Activated CD4-positive, alpha-beta T cell treated with anti-CD3 and anti-CD28 coated beads for 36 hours (primary cell): ENCODE measurements at regions of chr18 and their contacts with region 1.

Region 1: GRCh38 chr18:62425465-62426195 is 97.2 kb upstream of the ZCCHC2 start:
- DNase-seq: peak; percentile 75
- ATAC-seq: peak; percentile 50
- H3K4me3 Mint-ChIP-seq: no peak overlapping the region
- H3K27ac Mint-ChIP-seq: peak overlapping the region; percentile 81
- H3K4me1 Mint-ChIP-seq: peaks cover 31% of the 10 kb centered on the region
- H3K27me3 Mint-ChIP-seq: peaks cover 4% of the 10 kb centered on the region

Region 2: GRCh38 chr18:62186774-62187542 is 238.7 kb before region 1 on chr18 and contains the starts of genes PIGN and RELCH:
- CTCF ChIA-PET with region 1: interaction called, 4 read pairs
- POLR2A ChIA-PET with region 1: no interaction called
- intact Hi-C with region 1: loop called (anchors 1 to 2 kb)
- DNase-seq: peak; percentile 97
- ATAC-seq: peak; percentile 94
- H3K4me3 Mint-ChIP-seq: peak within 1 kb of the TSS; percentile 98
- H3K27ac Mint-ChIP-seq: peak within 1 kb of the TSS; percentile 96
- H3K4me1 Mint-ChIP-seq: peaks cover 43% of the 10 kb centered on the region
- H3K27me3 Mint-ChIP-seq: no peaks in the 10 kb centered on the region
- total RNA-seq, gene PIGN: 29.0 to 29.4 TPM
- total RNA-seq, gene RELCH: 20.5 to 20.7 TPM

Region 3: DNA sequence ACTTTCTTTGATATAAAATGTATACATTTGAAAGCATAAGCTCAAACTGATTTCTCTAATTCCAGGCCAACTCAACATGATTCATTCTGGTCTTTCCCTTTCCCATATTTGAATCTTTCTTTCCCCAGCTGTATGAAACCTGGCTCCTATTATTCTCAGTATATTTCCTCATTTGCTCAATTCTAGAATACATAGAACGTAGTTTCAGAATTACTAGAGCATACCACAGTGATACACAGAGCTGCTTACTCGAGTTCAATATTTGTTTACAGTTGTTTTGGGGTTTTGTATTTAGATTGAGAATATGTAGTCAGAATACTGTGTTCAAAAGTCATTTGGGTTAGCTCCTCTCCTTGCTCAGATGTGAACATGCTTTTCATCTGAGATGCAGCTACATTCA is 57.5 kb before region 1 on chr18:
- CTCF ChIA-PET with region 1: interaction called, 3 read pairs
- POLR2A ChIA-PET with region 1: no interaction called
- intact Hi-C with region 1: loop called in 1 of 2 experiments (anchors 1 kb)
- DNase-seq: no peak
- ATAC-seq: peak; percentile 65
- H3K4me3 Mint-ChIP-seq: no peak overlapping the region
- H3K27ac Mint-ChIP-seq: no peak overlapping the region
- H3K4me1 Mint-ChIP-seq: peaks cover 28% of the 10 kb centered on the region
- H3K27me3 Mint-ChIP-seq: peaks cover 3% of the 10 kb centered on the region

Region 4: GRCh38 chr18:62505669-62506494 is 80.3 kb after region 1 on chr18:
- CTCF ChIA-PET with region 1: interaction called, 6 read pairs
- POLR2A ChIA-PET with region 1: interaction called, 3 read pairs
- intact Hi-C with region 1: loop called (anchors 1 kb)
- DNase-seq: peak; percentile 66
- ATAC-seq: peak; percentile 99
- H3K4me3 Mint-ChIP-seq: peak overlapping the region; percentile 60
- H3K27ac Mint-ChIP-seq: peak overlapping the region; percentile 98
- H3K4me1 Mint-ChIP-seq: peaks cover 26% of the 10 kb centered on the region
- H3K27me3 Mint-ChIP-seq: no peaks in the 10 kb centered on the region

Region 5: GRCh38 chr18:62584241-62585120 is 158.9 kb after region 1 on chr18:
- CTCF ChIA-PET with region 1: interaction called, 24 read pairs
- POLR2A ChIA-PET with region 1: interaction called, 3 read pairs
- intact Hi-C with region 1: loop called (anchors 1 kb)
- DNase-seq: peak; percentile 93
- ATAC-seq: peak; percentile 71
- H3K4me3 Mint-ChIP-seq: peak overlapping the region; percentile 1
- H3K27ac Mint-ChIP-seq: peak overlapping the region; percentile 91
- H3K4me1 Mint-ChIP-seq: peaks cover 39% of the 10 kb centered on the region
- H3K27me3 Mint-ChIP-seq: no peaks in the 10 kb centered on the region

Region 6: GRCh38 chr18:62982600-62983251 is 557.1 kb after region 1 on chr18:
- CTCF ChIA-PET with region 1: interaction called, 4 read pairs
- POLR2A ChIA-PET with region 1: no interaction called
- intact Hi-C with region 1: loop called (anchors 5 kb)
- DNase-seq: peak; percentile 74
- ATAC-seq: peak; percentile 72
- H3K4me3 Mint-ChIP-seq: no peak overlapping the region
- H3K27ac Mint-ChIP-seq: no peak overlapping the region
- H3K4me1 Mint-ChIP-seq: peaks cover 3% of the 10 kb centered on the region
- H3K27me3 Mint-ChIP-seq: no peaks in the 10 kb centered on the region